Left lung (tissue), 14 donors: ENCODE measurements at regions of chr3 and their contacts with region 1.

Region 1: DNA sequence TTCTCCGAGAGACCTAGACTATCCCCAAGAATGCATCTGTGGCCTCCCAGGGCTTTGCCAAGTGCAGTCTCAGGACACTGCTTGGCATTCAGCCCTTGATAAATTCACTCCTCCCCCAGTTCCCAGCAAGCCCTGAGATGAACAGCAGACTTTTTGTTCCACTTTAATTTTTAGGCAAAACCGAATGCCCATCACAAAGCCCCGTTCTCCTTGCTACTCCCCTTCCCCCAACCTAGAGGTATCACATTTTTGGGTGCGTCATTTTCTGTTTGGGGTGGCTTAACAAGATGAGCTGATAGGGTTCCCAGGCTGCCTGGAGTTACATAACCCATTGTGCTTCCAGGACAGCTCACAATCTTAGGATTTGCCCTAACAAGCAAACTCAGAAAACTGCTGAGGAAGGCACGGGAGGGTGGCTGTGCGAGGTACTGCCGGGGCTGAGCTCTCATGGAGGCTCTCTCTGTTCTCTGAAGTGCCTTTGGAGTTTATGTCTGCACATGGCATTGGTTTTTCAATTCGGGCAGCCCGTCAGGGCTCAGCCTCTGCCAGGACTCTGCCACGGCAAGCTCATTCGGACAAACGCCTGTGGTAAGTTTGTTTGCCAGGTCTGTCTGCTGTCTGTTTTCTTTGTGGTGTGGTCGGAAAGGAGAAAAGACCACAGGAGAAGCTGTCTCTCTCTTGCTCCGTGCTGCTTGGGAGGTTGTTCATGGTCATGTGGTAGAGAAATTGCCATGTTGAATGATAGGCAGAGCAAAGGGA is at the start of gene TRAK1:
- DNase-seq: no peak
- ATAC-seq: peak; percentile 50
- H3K4me3 ChIP-seq: no peak within 1 kb of the TSS
- H3K27ac ChIP-seq: peak within 1 kb of the TSS; percentile 13 to 65
- H3K4me1 ChIP-seq: peaks cover 0 to 3% of the 10 kb centered on the region in 2 donors
- H3K27me3 ChIP-seq: no peaks in the 10 kb centered on the region
- CTCF ChIP-seq: no peak
- polyA plus RNA-seq, gene TRAK1: 28.2 to 32.2 (median 30.2) TPM

Region 2: DNA sequence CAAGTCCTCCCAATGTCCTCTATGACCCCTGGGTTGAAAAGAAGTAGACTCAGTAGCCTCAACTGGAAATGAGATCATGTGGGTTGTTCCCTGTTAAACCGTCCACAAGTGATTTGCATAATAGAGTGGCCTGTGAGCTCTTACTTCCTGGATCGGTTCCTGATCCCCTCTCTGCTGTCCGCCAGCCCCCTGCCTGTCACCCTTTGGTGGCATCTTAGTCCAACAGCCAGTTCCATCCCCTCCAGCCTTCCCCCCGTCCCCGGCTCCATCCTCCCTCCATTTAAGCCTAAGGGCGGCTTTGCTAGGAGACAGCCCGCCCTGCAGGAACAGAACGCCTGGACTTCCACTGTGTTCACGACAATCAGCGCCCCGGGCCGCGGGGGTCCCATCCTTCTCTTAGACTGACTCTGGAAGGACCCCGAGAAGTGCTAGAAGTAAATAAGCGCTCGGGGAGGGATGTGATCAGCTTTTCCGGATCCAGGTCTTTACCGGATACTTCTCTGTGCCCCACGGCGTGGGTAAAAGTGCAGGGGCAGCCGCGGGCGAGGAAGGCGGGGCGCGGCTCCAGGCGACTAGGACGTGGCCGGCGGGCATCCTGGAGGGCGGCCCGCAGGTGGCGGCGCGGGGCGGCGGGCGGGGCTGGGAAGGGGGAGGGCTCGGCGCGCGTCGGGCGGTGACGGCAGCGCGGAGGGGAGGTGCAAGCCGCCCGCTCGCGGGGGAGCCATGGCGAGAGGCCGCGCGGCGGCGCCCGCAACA is 78.0 kb before region 1 on chr3:
- intact Hi-C with region 1: loop called in 1 of 2 experiments (anchors 10 kb)
- DNase-seq: peak; percentile 51 to 97 (median 82)
- ATAC-seq: peak; percentile 92
- H3K4me3 ChIP-seq: peak overlapping the region; percentile 56 to 84
- H3K27ac ChIP-seq: peak overlapping the region; percentile 92 to 100
- H3K4me1 ChIP-seq: peaks cover 0 to 47% of the 10 kb centered on the region in 2 donors
- H3K27me3 ChIP-seq: no peaks in the 10 kb centered on the region
- CTCF ChIP-seq: no peak